ENCODE measurements at regions of chr20 and their contacts with region 1.

Region 1: DNA sequence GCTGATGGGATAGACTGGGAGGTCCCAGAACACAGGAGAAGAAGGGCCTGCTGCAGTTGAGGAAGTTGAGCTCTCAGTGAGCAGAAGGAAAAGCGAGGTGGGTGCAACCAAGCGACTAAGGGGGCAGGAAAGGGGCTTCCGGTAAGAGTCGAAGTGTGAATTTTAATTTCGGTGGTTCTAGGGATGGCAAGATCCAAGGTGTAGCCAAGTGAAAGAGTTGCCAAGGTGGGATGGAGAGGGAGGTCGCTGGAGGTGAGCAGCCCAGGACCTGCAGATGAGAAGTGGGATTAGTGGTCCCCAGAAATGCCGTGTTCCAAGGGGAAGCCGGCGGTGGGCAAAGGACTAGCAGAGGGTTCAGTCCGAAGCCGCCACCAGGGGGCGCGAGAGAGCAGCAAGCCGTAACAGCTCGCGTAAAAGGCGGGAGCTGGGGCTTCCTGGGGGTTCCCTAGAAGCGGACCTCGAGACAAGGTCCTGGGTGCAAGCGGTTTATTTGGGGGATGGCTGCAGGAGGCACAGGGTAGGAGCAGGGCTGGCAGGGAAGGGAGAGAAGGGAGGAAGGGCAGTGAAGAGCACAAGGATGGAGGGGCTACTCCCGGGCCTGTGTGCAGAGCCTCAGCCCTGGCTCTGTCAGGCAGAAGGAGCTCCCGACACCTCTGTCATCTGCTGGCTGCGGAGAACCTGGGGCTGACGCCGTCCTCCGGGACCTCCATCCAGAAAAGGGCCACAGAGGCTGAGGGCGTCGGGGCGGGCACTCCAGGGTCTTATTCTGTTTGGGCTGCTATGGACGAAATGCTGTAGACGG is 103.6 kb downstream of the PAX1 start:
- DNase-seq: peak; percentile 72
- ATAC-seq: no peak
- H3K4me3 Mint-ChIP-seq: no peak overlapping the region
- H3K27ac Mint-ChIP-seq: no peak overlapping the region
- H3K4me1 Mint-ChIP-seq: no peaks in the 10 kb centered on the region
- H3K27me3 Mint-ChIP-seq: peaks cover 4% of the 10 kb centered on the region

Region 2: DNA sequence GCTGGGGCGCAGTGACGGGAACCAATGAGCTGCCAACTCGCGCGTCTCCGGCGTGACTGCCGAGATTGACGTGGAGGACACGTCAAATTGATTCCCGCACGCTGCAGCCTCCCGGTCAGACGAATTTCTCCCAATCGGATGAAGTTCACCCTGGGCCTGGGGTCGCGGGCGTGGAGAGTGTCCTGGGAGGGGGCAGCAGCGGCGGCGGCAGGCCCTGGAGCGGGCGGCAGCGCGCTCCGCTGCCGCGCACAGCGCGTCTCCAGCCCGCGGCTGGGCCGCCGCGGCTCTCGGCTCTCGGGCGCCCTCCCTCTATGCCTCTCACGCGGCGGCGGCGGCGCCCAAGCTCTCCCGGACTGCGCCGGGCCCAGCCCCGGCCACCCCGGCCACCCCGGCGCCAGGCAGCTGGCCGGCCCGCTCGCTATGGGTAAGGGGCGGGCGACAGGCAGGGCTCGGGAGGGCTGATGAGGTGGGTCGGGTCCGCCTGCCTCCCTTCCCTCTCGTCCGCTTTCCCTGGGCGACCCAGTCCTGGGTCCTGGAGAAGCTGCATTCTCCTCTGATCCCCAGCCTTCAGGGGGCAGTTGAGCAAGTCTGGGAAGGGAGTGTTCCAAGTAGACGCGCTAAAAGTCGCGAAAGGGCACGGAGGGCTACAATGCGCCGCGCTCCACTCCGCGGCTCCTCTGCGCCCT is 103.3 kb before region 1 on chr20 and contains the start of gene PAX1:
- CTCF ChIA-PET with region 1: no interaction called
- POLR2A ChIA-PET with region 1: no interaction called
- intact Hi-C with region 1: no loop called
- DNase-seq: peak; percentile 8
- ATAC-seq: no peak
- H3K4me3 Mint-ChIP-seq: no peak within 1 kb of the TSS
- H3K27ac Mint-ChIP-seq: no peak within 1 kb of the TSS
- H3K4me1 Mint-ChIP-seq: no peaks in the 10 kb centered on the region
- H3K27me3 Mint-ChIP-seq: peaks cover 75% of the 10 kb centered on the region
- total RNA-seq, gene PAX1: not detected

Region 3: GRCh38 chr20:22106308-22106938 is 297.4 kb after region 1 on chr20:
- CTCF ChIA-PET with region 1: no interaction called
- POLR2A ChIA-PET with region 1: no interaction called
- intact Hi-C with region 1: loop called in 1 of 2 experiments (anchors 1 kb)
- DNase-seq: no peak
- ATAC-seq: no peak
- H3K4me3 Mint-ChIP-seq: no peak overlapping the region
- H3K27ac Mint-ChIP-seq: no peak overlapping the region
- H3K4me1 Mint-ChIP-seq: no peaks in the 10 kb centered on the region
- H3K27me3 Mint-ChIP-seq: no peaks in the 10 kb centered on the region

Region 4: DNA sequence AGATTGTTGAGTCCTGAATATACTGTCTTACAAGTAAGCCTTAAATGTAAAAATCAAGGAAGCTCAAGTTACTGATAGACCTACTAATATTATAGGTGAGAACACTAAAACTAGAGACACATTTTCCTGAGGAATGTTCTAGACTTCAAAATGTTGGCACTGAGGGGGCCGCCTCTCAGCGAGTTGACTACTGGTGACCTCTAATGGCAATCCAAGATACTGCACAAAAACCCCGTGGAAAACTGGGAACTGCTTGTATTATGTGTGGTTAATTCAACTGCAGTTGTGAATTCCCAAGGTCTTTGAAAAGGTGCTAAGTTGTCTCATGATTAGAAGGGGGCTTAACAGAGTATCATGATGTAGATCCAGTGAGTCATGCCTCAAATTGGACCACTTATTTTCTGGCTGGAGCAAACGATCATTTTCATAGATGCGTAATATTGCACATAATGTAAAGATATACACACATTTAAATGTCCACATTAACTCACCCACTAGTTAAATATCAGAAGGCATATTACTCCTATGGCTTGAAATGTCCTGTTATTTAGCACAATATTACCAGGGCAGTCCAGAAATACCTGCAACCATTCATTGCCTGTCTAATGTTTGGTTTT is 439.1 kb after region 1 on chr20:
- CTCF ChIA-PET with region 1: no interaction called
- POLR2A ChIA-PET with region 1: no interaction called
- intact Hi-C with region 1: loop called in 1 of 2 experiments (anchors 2 kb)
- DNase-seq: peak; percentile 5
- ATAC-seq: no peak
- H3K4me3 Mint-ChIP-seq: no peak overlapping the region
- H3K27ac Mint-ChIP-seq: no peak overlapping the region
- H3K4me1 Mint-ChIP-seq: no peaks in the 10 kb centered on the region
- H3K27me3 Mint-ChIP-seq: peaks cover 3% of the 10 kb centered on the region

Region 5: DNA sequence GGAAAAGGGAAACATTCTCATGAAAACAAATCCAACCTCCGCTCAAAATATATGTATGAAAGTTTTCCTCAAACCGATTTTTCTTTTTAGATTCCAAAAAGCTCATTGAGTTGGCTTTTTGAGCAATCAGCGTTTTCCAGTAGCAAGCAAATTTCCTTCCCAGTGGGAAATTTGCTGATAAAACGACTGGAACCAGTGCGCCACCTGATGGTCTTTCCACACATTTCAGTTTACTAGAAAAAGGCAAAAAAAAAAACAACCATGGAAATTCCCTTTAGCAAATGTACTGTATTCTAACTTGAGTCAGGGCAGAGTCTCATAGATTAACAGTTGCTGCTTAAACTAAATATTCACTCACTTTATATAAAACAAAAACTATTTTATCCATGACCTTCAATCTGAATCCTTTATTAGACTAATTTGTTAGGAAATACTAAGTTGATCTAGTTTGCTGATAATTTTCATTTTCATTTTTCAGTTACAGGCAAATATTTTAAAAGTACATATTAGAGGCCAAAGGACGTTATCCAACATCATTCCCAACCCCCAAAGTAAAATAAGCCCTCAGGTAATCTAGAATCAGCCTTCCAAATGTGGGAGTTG is 503.8 kb after region 1 on chr20:
- CTCF ChIA-PET with region 1: no interaction called
- POLR2A ChIA-PET with region 1: no interaction called
- intact Hi-C with region 1: loop called in 1 of 2 experiments (anchors 5 kb)
- DNase-seq: peak; percentile 9
- ATAC-seq: no peak
- H3K4me3 Mint-ChIP-seq: no peak overlapping the region
- H3K27ac Mint-ChIP-seq: no peak overlapping the region
- H3K4me1 Mint-ChIP-seq: no peaks in the 10 kb centered on the region
- H3K27me3 Mint-ChIP-seq: peaks cover 2% of the 10 kb centered on the region

Region 6: DNA sequence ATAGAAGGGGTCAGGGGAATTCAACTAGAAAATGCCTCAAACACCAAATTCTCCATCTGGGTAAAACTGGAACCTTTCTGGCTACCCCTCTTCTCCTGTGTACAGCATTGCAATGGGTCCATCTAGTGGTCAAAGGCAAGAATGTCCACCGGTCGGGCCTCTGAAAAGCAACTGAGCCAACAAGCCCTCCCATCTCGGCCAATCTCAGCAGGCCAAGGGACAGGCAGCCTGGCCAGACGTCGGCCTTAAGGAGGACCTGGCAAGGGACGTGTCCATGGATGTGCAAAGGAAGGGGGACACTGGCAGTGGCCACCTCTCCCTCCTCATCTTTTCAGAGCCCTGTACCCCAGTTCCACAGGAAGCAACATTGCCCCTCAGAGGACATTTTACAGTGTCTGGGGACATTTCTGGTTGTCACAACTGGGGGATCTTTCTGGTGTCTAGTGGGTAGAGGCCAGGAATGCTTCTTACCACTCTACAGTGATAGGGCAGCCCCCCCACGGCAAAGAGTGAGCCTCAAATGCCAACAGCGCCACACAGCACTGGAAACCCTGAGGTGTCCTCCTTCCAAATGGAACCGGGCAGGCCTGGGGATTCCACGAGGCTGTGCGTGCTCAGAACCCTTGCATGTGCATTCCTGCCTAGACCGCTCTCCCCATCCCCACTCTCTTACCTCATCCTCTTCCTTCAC is 875.2 kb after region 1 on chr20:
- CTCF ChIA-PET with region 1: no interaction called
- POLR2A ChIA-PET with region 1: no interaction called
- intact Hi-C with region 1: loop called in 1 of 2 experiments (anchors 5 kb)
- DNase-seq: peak; percentile 61
- ATAC-seq: peak; percentile 61
- H3K4me3 Mint-ChIP-seq: no peak overlapping the region
- H3K27ac Mint-ChIP-seq: no peak overlapping the region
- H3K4me1 Mint-ChIP-seq: peaks cover 3% of the 10 kb centered on the region
- H3K27me3 Mint-ChIP-seq: peaks cover 6% of the 10 kb centered on the region

Measured in activated CD4-positive, alpha-beta T cell treated with anti-CD3 and anti-CD28 coated beads for 36 hours (primary cell).